ENCODE measurements at regions of chr20 and their contacts with region 1.

Region 1: GRCh38 chr20:54207743-54208547 is at the start of gene PFDN4:
- DNase-seq: peak; percentile 75 to 92 (median 82)
- ATAC-seq: peak; percentile 96 to 98 (median 97)
- H3K4me3 ChIP-seq: peak within 1 kb of the TSS; percentile 91 to 98 (median 96)
- H3K27ac ChIP-seq: peak within 1 kb of the TSS; percentile 96 to 99 (median 98)
- H3K4me1 ChIP-seq: peaks cover 0 to 12% (median 0%) of the 10 kb centered on the region in 3 donors
- H3K27me3 ChIP-seq: no peaks in the 10 kb centered on the region
- CTCF ChIP-seq: peak; percentile 63 to 74 (median 66)
- total RNA-seq, gene PFDN4: 7.7 to 13.2 (median 8.9) TPM

Region 2: GRCh38 chr20:54634835-54635234 is 426.9 kb after region 1 on chr20:
- intact Hi-C with region 1: loop called in 1 of 3 experiments (anchors 5 kb)
- DNase-seq: no peak
- ATAC-seq: no peak
- H3K4me3 ChIP-seq: no peak overlapping the region
- H3K27ac ChIP-seq: no peak overlapping the region
- H3K4me1 ChIP-seq: no peaks in the 10 kb centered on the region
- H3K27me3 ChIP-seq: no peaks in the 10 kb centered on the region
- CTCF ChIP-seq: no peak